Psoas muscle (tissue), 8 donors: ENCODE measurements at regions of chr9 and their contacts with region 1.

Region 1: DNA sequence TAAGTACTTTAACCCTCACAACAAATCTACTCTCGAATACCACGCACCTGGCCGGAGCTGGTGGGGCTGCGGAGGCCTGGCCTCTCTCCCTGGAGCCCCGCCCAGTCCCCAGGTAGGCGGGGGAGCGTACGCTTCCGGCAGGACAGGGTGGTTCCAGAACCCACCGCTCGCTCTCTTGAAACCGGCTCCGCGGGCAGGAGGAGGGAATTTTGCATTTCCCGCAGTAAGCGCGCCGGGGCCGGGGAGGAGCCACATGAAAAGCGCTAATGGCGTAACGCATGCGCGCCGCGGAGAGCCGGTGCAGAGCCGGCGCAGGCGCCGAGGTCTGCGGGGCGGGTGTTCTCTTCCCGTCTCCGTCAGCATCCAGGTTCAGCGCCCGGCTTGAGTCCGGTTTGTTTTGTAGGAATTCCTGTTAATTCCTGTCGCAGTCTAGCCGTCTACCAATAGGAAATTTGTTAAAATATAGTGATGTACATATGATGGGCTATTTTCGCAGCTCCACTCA is 20.8 kb downstream of the CAVIN4 start:
- DNase-seq: peak; percentile 83 to 88
- ATAC-seq: peak; percentile 56 to 87 (median 72)
- H3K4me3 ChIP-seq: peak overlapping the region; percentile 63
- H3K27ac ChIP-seq: no peak overlapping the region
- H3K4me1 ChIP-seq: peaks cover 4% of the 10 kb centered on the region
- H3K27me3 ChIP-seq: no peaks in the 10 kb centered on the region
- CTCF ChIP-seq: no peak

Region 2: DNA sequence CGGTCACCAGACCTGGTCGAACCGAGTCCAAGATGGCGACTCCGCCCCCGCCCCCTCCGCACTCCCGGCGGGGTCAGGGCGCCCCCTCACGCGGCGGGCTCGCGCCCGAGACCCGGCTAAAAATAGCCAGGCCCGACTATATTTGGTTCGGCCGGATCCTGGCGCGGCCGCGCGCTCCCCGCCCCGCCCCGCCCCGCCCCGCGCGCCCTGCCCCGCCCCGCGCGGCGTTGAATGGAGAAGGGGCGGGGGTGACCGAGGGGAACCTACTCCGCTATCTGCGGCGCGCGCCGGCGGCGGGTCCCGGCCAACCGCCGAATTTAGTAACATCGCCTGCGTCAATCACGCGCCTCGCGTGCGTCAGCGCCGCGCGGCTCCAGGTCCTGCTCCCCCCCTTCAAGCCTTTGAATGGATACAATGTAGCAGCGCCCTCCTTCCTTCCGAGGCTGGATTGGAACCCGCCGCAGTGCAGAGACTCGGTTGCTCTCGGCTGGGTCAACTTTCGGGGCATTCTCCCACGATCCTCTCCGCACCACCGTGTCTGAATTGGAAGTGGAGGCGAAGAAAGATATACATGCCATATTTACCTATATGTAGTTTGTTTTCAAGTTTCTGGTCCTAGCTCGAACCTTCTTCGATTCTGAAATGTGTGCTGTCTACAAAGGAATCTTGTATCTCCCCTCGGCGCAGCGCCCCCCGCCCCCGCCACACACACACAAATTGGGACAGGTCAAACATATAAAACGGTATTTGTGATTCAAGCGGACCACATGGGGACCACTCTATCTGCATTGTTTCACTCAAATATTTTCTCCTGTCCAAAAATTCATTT is 778.6 kb before region 1 on chr9:
- intact Hi-C with region 1: loop called in 1 of 2 experiments (anchors 10 kb)
- DNase-seq: peak; percentile 96 to 98
- ATAC-seq: peak; percentile 70 to 74 (median 72)
- H3K4me3 ChIP-seq: peak overlapping the region; percentile 79
- H3K27ac ChIP-seq: peak overlapping the region; percentile 99
- H3K4me1 ChIP-seq: peaks cover 22% of the 10 kb centered on the region
- H3K27me3 ChIP-seq: no peaks in the 10 kb centered on the region
- CTCF ChIP-seq: no peak

Region 3: GRCh38 chr9:100352727-100353505 is 245.8 kb before region 1 on chr9 and contains the start of gene TEX10:
- intact Hi-C with region 1: loop called in 1 of 2 experiments (anchors 5 kb)
- DNase-seq: peak; percentile 88 to 94
- ATAC-seq: peak; percentile 97 to 99 (median 98)
- H3K4me3 ChIP-seq: peak within 1 kb of the TSS; percentile 91
- H3K27ac ChIP-seq: peak within 1 kb of the TSS; percentile 87
- H3K4me1 ChIP-seq: peaks cover 28% of the 10 kb centered on the region
- H3K27me3 ChIP-seq: no peaks in the 10 kb centered on the region
- CTCF ChIP-seq: no peak
- total RNA-seq, gene TEX10: 12.7 to 23.1 (median 14.7) TPM

Region 4: DNA sequence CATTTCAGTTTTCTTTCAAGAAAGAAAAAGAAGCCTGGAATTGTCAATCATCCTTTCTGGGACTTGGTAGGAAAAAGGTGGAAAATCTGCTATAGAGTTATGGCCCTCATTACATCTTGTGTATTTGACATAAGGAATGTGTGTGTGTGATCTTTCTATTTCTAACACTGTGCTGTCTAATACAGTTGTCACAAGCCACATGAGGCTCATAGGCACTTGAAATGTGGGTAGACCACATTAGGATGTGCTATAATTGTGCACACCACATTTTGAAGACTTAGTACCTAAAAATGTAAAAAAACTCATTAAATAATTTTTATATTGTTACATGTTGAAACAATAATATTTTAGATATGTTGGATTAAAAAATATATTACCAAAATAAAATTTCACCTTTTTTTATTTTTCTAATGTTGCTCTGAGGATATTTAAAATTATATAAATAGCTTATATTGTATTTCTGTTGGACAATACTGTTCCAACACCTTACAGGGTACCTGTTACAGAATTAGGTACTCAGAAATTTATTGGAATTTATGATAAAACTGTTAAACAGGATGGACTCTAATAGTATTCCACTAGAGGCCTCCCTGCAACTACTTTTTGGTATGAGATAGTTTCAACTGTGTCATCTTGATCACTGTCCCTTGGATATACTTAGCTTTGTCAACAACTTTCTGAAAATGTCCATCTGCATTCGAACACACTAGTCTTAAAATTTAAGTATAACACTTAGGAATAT is 153.4 kb before region 1 on chr9:
- intact Hi-C with region 1: loop called in 1 of 2 experiments (anchors 1 kb)
- DNase-seq: no peak
- ATAC-seq: peak; percentile 75 to 93 (median 84)
- H3K4me3 ChIP-seq: no peak overlapping the region
- H3K27ac ChIP-seq: peak overlapping the region; percentile 50
- H3K4me1 ChIP-seq: peaks cover 19% of the 10 kb centered on the region
- H3K27me3 ChIP-seq: no peaks in the 10 kb centered on the region
- CTCF ChIP-seq: peak; percentile 40

Region 5: GRCh38 chr9:100455470-100455869 is 143.2 kb before region 1 on chr9:
- intact Hi-C with region 1: no loop called
- DNase-seq: no peak
- ATAC-seq: peak; percentile 43 to 73 (median 69)
- H3K4me3 ChIP-seq: no peak overlapping the region
- H3K27ac ChIP-seq: no peak overlapping the region
- H3K4me1 ChIP-seq: peaks cover 9% of the 10 kb centered on the region
- H3K27me3 ChIP-seq: no peaks in the 10 kb centered on the region
- CTCF ChIP-seq: no peak

Region 6: GRCh38 chr9:100505564-100506159 is 93.0 kb before region 1 on chr9:
- intact Hi-C with region 1: loop called (anchors 2 to 5 kb)
- DNase-seq: peak; percentile 45 to 80
- ATAC-seq: peak; percentile 36 to 85 (median 64)
- H3K4me3 ChIP-seq: no peak overlapping the region
- H3K27ac ChIP-seq: no peak overlapping the region
- H3K4me1 ChIP-seq: peaks cover 3% of the 10 kb centered on the region
- H3K27me3 ChIP-seq: no peaks in the 10 kb centered on the region
- CTCF ChIP-seq: peak; percentile 71